Activated B cell treated with CpG ODN at 0.5 μM for 24 hours (primary cell): ENCODE measurements at regions of chr10 and their contacts with region 1.

Region 1: GRCh38 chr10:94362360-94363250 is at the start of gene NOC3L:
- DNase-seq: peak; percentile 96
- ATAC-seq: peak; percentile 93
- H3K4me3 Mint-ChIP-seq: peak within 1 kb of the TSS; percentile 98
- H3K27ac Mint-ChIP-seq: peak within 1 kb of the TSS; percentile 99
- H3K4me1 Mint-ChIP-seq: peaks cover 43% of the 10 kb centered on the region
- H3K27me3 Mint-ChIP-seq: peaks cover 12% of the 10 kb centered on the region
- CTCF ChIP-seq: peak; percentile 34
- total RNA-seq, gene NOC3L: 46.7 and 50.8 TPM in 2 replicates

Region 2: DNA sequence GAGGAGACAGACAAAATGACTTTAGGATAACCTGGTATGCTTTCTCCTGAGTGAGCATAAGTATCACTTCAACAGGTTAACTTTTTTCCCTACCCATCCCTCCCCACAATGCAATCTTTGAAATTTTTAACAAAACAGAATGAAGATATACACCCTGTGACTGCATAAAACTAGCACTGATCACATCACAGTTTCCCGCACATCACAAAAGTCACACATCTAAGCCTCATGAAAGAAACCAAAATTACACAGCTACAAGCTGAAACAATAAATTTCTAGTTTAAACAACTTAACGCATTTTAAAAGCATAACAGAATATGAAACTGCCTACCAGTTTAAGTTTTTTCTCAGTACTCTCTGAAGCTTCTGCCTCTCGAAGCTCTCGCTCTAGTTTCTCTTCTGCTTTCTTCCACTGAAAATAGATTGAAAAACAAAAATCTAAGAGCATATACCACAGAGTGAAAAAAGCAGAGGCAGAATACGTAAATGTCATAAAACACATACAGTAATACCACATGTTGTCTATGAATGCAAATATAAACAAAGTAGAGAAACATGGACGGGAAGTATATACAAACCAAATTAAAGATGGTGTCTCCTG is 18.0 kb before region 1 on chr10:
- CTCF ChIA-PET with region 1: interaction called, 5 read pairs
- POLR2A ChIA-PET with region 1: interaction called, 7 read pairs
- intact Hi-C with region 1: loop called (anchors 1 kb)
- DNase-seq: no peak
- ATAC-seq: peak; percentile 91
- H3K4me3 Mint-ChIP-seq: peak overlapping the region; percentile 79
- H3K27ac Mint-ChIP-seq: peak overlapping the region; percentile 90
- H3K4me1 Mint-ChIP-seq: peaks cover 31% of the 10 kb centered on the region
- H3K27me3 Mint-ChIP-seq: no peaks in the 10 kb centered on the region
- CTCF ChIP-seq: no peak

Region 3: DNA sequence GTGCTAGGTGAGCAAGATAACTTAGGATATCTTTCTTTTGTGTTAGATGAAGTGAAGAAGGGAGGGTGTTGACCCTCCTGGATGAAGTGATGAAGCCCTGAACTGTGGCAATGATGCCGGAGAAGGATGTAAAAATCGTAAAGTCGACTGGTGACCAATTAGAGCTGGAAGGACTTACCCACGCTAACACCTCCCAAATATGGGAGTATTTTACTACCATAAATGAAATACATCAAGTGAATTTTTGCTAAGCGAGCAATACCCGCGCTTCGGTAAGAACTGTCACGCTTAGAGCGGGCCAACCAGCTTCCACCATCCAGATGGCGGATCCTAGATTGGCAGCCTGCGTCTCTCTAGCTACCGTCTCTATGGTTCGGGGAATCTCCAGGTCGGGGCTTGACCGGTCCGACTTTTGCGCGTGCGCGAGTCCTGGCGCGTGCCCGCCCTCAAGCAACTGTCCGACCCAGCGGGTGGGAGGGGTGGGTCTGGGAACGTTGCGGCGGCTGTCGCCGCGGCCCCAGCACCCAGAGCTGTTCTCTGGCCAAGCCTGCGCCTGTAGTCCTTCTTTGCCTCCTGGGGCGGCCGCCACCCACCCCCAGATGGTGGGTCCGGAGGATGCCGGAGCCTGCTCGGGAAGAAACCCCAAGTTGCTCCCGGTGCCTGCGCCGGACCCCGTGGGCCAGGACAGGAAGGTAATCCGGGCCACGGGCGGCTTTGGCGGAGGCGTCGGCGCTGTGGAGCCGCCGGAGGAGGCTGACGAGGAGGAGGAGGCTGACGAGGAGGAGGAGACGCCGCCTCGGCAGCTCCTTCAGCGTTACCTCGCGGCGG is 39.6 kb after region 1 on chr10 and contains the start of gene TBC1D12:
- CTCF ChIA-PET with region 1: interaction called, 8 read pairs
- POLR2A ChIA-PET with region 1: interaction called, 52 read pairs
- intact Hi-C with region 1: loop called (anchors 1 kb)
- DNase-seq: peak; percentile 56
- ATAC-seq: peak; percentile 54
- H3K4me3 Mint-ChIP-seq: peak within 1 kb of the TSS; percentile 88
- H3K27ac Mint-ChIP-seq: peak within 1 kb of the TSS; percentile 83
- H3K4me1 Mint-ChIP-seq: peaks cover 15% of the 10 kb centered on the region
- H3K27me3 Mint-ChIP-seq: peaks cover 19% of the 10 kb centered on the region
- CTCF ChIP-seq: no peak
- total RNA-seq, gene TBC1D12: 6.1 and 7.0 TPM in 2 replicates

Region 4: DNA sequence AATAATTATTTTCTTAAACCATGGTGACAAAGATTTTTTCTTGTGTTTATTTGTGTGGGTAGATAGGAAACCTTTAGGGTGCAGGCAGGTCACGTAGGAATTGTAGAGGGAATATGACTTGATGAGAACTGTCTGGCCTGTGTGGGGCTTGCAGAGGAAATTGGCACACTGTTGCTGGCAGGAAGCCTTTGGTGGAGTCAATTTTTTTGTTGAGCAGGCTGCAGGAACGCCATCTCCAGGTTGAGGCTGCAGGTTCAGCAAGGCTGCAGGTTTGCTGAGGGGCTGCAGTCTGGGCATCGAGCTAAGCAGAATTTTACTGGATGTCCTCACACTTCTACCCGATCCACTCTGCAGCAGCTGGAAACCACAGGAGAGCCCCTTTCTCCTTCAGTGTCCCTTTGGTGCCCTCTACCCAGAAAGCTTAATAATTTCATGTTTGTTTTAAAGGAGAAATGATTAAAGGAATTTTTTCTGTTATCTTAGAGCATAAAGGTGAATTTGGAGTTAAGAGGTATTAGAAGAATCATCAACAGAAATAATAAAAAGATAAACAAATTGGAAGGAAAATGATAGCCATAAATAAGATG is 76.8 kb after region 1 on chr10:
- CTCF ChIA-PET with region 1: interaction called, 7 read pairs
- POLR2A ChIA-PET with region 1: interaction called, 4 read pairs
- intact Hi-C with region 1: loop called (anchors 1 kb)
- DNase-seq: no peak
- ATAC-seq: no peak
- H3K4me3 Mint-ChIP-seq: no peak overlapping the region
- H3K27ac Mint-ChIP-seq: no peak overlapping the region
- H3K4me1 Mint-ChIP-seq: no peaks in the 10 kb centered on the region
- H3K27me3 Mint-ChIP-seq: no peaks in the 10 kb centered on the region
- CTCF ChIP-seq: no peak

Region 5: GRCh38 chr10:94545391-94546048 is 182.9 kb after region 1 on chr10 and contains the start of gene HELLS:
- CTCF ChIA-PET with region 1: no interaction called
- POLR2A ChIA-PET with region 1: interaction called, 3 read pairs
- intact Hi-C with region 1: loop called (anchors 1 kb)
- DNase-seq: peak; percentile 60
- ATAC-seq: peak; percentile 81
- H3K4me3 Mint-ChIP-seq: peak within 1 kb of the TSS; percentile 99
- H3K27ac Mint-ChIP-seq: peak within 1 kb of the TSS; percentile 87
- H3K4me1 Mint-ChIP-seq: peaks cover 23% of the 10 kb centered on the region
- H3K27me3 Mint-ChIP-seq: peaks cover 2% of the 10 kb centered on the region
- CTCF ChIP-seq: no peak
- total RNA-seq, gene HELLS: 23.8 and 27.3 TPM in 2 replicates